WTC11 (cell line): ENCODE measurements at regions of chr1 and their contacts with region 1.

Region 1: GRCh38 chr1:94025383-94026340 is 95.3 kb downstream of the ABCA4 start:
- DNase-seq: no peak
- ATAC-seq: peak; percentile 69
- H3K4me3 Mint-ChIP-seq: no peak overlapping the region
- H3K27ac Mint-ChIP-seq: 0 out of 2 replicates have a peak overlapping the region, but pooled peaks have one; percentile 0
- H3K4me1 Mint-ChIP-seq: peaks cover 36% of the 10 kb centered on the region
- H3K27me3 Mint-ChIP-seq: no peaks in the 10 kb centered on the region; the same call in 1 of the 2 replicates
- CTCF ChIP-seq: peak; percentile 45

Region 2: DNA sequence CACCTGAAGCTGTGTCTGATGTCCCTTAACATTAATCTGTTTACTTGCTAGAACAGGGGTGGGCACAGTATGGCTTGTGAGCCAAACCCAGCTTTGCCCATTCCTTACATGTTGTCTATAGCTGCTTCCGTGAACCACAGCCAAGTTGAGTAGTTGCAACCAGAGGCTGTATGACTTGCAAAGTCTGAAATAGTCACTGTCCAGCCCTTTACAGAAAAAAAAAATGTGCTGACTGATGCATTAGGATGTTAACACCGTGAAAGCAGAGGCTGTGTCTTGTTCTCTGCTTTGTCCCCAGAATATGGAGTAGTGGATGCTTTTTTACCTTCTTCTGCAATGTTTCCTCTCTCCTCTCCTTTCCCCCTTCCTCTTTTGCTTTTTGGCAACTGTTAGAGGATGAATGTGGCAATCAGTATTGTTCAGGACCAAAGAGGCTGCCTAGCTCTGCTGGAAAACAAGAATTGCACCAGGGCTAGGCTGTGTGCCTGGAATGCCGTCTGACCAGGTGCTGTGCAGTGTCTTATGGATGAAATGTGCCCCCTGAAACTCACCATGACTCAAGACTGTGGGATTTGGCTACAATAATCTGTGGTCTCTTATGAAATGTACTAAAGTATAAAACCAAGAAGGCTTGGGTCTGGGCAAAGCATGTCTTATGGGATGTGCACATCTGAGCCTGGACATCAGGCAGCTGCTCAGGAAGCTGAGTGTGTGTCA is 36.9 kb before region 1 on chr1:
- CTCF ChIA-PET with region 1: interaction called, 14 read pairs
- POLR2A ChIA-PET with region 1: no interaction called
- DNase-seq: no peak
- ATAC-seq: no peak
- H3K4me3 Mint-ChIP-seq: no peak overlapping the region
- H3K27ac Mint-ChIP-seq: no peak overlapping the region
- H3K4me1 Mint-ChIP-seq: peaks cover 14% of the 10 kb centered on the region
- H3K27me3 Mint-ChIP-seq: no peaks in the 10 kb centered on the region; the same call in 1 of the 2 replicates
- CTCF ChIP-seq: no peak

Region 3: DNA sequence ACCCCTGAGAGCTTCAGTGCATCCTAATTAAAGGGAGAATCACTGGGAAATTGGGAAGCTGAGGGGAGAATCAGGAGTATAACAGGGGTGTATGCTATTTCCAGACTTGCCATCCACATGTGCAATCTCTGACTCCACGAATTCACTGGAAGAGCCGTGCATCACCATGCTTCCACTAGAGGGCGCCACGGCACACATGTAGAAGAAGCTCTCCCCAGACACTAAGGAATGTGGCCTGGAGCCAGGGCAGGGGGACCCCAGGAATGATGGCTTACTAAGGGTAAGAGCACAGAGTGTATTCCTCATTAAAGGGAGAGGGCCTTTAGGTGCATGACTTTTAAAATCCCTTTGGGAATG is 13.8 kb after region 1 on chr1:
- CTCF ChIA-PET with region 1: interaction called, 61 read pairs
- POLR2A ChIA-PET with region 1: no interaction called
- DNase-seq: peak; percentile 86
- ATAC-seq: peak; percentile 90
- H3K4me3 Mint-ChIP-seq: no peak overlapping the region
- H3K27ac Mint-ChIP-seq: no peak overlapping the region
- H3K4me1 Mint-ChIP-seq: peaks cover 20% of the 10 kb centered on the region
- H3K27me3 Mint-ChIP-seq: peaks cover 5% of the 10 kb centered on the region; the same call in 1 of the 2 replicates
- CTCF ChIP-seq: peak; percentile 84

Region 4: GRCh38 chr1:94061513-94062443 is 36.1 kb after region 1 on chr1:
- CTCF ChIA-PET with region 1: interaction called, 28 read pairs
- POLR2A ChIA-PET with region 1: no interaction called
- DNase-seq: peak; percentile 78
- ATAC-seq: peak; percentile 97
- H3K4me3 Mint-ChIP-seq: no peak overlapping the region
- H3K27ac Mint-ChIP-seq: no peak overlapping the region
- H3K4me1 Mint-ChIP-seq: peaks cover 17% of the 10 kb centered on the region
- H3K27me3 Mint-ChIP-seq: peaks cover 35% of the 10 kb centered on the region
- CTCF ChIP-seq: peak; percentile 85